ENCODE measurements at regions of chr4 and their contacts with region 1.

Region 1: GRCh38 chr4:25234390-25235370 is 847 bp downstream of the PI4K2B start:
- DNase-seq: peak; percentile 73 to 82 (median 77)
- H3K4me3 ChIP-seq: peak overlapping the region; percentile 55 to 87
- H3K4me3 Mint-ChIP-seq: peak overlapping the region; percentile 83 to 98 (median 94)
- H3K27ac ChIP-seq: peak overlapping the region; percentile 87
- H3K27ac Mint-ChIP-seq: peak overlapping the region; percentile 85 to 98 (median 96)
- H3K4me1 ChIP-seq: peaks cover 37% of the 10 kb centered on the region
- H3K4me1 Mint-ChIP-seq: peaks cover 24 to 76% (median 39%) of the 10 kb centered on the region in 4 donors
- H3K27me3 ChIP-seq: no peaks in the 10 kb centered on the region
- H3K27me3 Mint-ChIP-seq: no peaks in the 10 kb centered on the region

Region 2: GRCh38 chr4:24584175-24584850 is 650.4 kb before region 1 on chr4 and contains the start of gene DHX15:
- CTCF ChIA-PET with region 1: no interaction called
- POLR2A ChIA-PET with region 1: no interaction called
- intact Hi-C with region 1: loop called (anchors 10 kb)
- DNase-seq: peak; percentile 91 to 94 (median 93)
- H3K4me3 ChIP-seq: peak within 1 kb of the TSS; percentile 85 to 96
- H3K4me3 Mint-ChIP-seq: peak within 1 kb of the TSS; percentile 97 to 100 (median 99)
- H3K27ac ChIP-seq: peak within 1 kb of the TSS; percentile 98
- H3K27ac Mint-ChIP-seq: peak within 1 kb of the TSS; percentile 97 to 100 (median 99)
- H3K4me1 ChIP-seq: peaks cover 45% of the 10 kb centered on the region
- H3K4me1 Mint-ChIP-seq: peaks cover 26 to 48% (median 40%) of the 10 kb centered on the region in 4 donors
- H3K27me3 ChIP-seq: no peaks in the 10 kb centered on the region
- H3K27me3 Mint-ChIP-seq: peaks cover 0 to 3% of the 10 kb centered on the region in 2 donors
- total RNA-seq, gene DHX15: 129 to 131 TPM

Region 3: GRCh38 chr4:25113915-25114904 is 120.5 kb before region 1 on chr4:
- CTCF ChIA-PET with region 1: no interaction called
- POLR2A ChIA-PET with region 1: no interaction called
- intact Hi-C with region 1: no loop called
- DNase-seq: no peak
- H3K4me3 ChIP-seq: no peak overlapping the region
- H3K4me3 Mint-ChIP-seq: no peak overlapping the region
- H3K27ac ChIP-seq: no peak overlapping the region
- H3K27ac Mint-ChIP-seq: no peak overlapping the region
- H3K4me1 ChIP-seq: no peaks in the 10 kb centered on the region
- H3K4me1 Mint-ChIP-seq: no peaks in the 10 kb centered on the region
- H3K27me3 ChIP-seq: no peaks in the 10 kb centered on the region
- H3K27me3 Mint-ChIP-seq: no peaks in the 10 kb centered on the region

Region 4: GRCh38 chr4:25180524-25181131 is 54.1 kb before region 1 on chr4:
- CTCF ChIA-PET with region 1: interaction called, 9 read pairs
- POLR2A ChIA-PET with region 1: no interaction called
- intact Hi-C with region 1: loop called (anchors 5 kb)
- DNase-seq: peak in 4 of 5 donors; percentile 23 to 39 (median 34)
- H3K4me3 ChIP-seq: no peak overlapping the region
- H3K4me3 Mint-ChIP-seq: no peak overlapping the region
- H3K27ac ChIP-seq: no peak overlapping the region
- H3K27ac Mint-ChIP-seq: peak overlapping the region in 3 of 7 donors; percentile 29 to 57 (median 43)
- H3K4me1 ChIP-seq: peaks cover 24% of the 10 kb centered on the region
- H3K4me1 Mint-ChIP-seq: peaks cover 22 to 29% (median 27%) of the 10 kb centered on the region in 4 donors
- H3K27me3 ChIP-seq: no peaks in the 10 kb centered on the region
- H3K27me3 Mint-ChIP-seq: no peaks in the 10 kb centered on the region

Region 5: DNA sequence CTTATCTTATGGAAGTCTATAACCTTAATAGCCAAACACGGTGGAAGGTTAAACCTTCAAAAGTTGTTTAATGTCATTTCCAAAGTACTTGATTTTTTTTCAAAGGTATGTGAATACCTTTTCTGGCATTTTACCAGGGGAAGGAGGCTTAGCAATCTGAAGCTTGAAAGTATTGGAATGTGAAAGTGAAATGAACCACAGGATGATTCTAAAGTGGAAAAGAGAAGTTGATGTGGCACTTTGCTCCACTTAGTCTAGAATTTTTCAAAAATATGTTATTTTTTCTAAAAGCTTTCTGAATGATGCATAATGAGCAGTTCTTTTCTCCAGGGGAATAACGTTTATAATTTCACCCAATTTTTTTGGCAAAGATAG is 18.4 kb after region 1 on chr4:
- CTCF ChIA-PET with region 1: interaction called, 6 read pairs
- POLR2A ChIA-PET with region 1: no interaction called
- intact Hi-C with region 1: loop called (anchors 2 kb)
- DNase-seq: no peak
- H3K4me3 ChIP-seq: no peak overlapping the region
- H3K4me3 Mint-ChIP-seq: no peak overlapping the region
- H3K27ac ChIP-seq: no peak overlapping the region
- H3K27ac Mint-ChIP-seq: peak overlapping the region in 5 of 7 donors; percentile 18 to 62 (median 48)
- H3K4me1 ChIP-seq: peaks cover 18% of the 10 kb centered on the region
- H3K4me1 Mint-ChIP-seq: peaks cover 24 to 39% (median 29%) of the 10 kb centered on the region in 4 donors
- H3K27me3 ChIP-seq: no peaks in the 10 kb centered on the region
- H3K27me3 Mint-ChIP-seq: no peaks in the 10 kb centered on the region

Region 6: GRCh38 chr4:25376754-25377571 is 142.3 kb after region 1 on chr4 and contains the start of gene ANAPC4:
- CTCF ChIA-PET with region 1: no interaction called
- POLR2A ChIA-PET with region 1: interaction called, 18 read pairs
- intact Hi-C with region 1: loop called (anchors 1 kb)
- DNase-seq: peak; percentile 92 to 97 (median 93)
- H3K4me3 ChIP-seq: peak within 1 kb of the TSS; percentile 57 to 95
- H3K4me3 Mint-ChIP-seq: peak within 1 kb of the TSS in 1 of 8 donors; percentile 80
- H3K27ac ChIP-seq: peak within 1 kb of the TSS; percentile 73
- H3K27ac Mint-ChIP-seq: peak within 1 kb of the TSS; percentile 65 to 92 (median 89)
- H3K4me1 ChIP-seq: peaks cover 24% of the 10 kb centered on the region
- H3K4me1 Mint-ChIP-seq: peaks cover 3 to 13% (median 10%) of the 10 kb centered on the region in 4 donors
- H3K27me3 ChIP-seq: no peaks in the 10 kb centered on the region
- H3K27me3 Mint-ChIP-seq: no peaks in the 10 kb centered on the region
- total RNA-seq, gene ANAPC4: 61.8 to 63.7 TPM

Region 7: DNA sequence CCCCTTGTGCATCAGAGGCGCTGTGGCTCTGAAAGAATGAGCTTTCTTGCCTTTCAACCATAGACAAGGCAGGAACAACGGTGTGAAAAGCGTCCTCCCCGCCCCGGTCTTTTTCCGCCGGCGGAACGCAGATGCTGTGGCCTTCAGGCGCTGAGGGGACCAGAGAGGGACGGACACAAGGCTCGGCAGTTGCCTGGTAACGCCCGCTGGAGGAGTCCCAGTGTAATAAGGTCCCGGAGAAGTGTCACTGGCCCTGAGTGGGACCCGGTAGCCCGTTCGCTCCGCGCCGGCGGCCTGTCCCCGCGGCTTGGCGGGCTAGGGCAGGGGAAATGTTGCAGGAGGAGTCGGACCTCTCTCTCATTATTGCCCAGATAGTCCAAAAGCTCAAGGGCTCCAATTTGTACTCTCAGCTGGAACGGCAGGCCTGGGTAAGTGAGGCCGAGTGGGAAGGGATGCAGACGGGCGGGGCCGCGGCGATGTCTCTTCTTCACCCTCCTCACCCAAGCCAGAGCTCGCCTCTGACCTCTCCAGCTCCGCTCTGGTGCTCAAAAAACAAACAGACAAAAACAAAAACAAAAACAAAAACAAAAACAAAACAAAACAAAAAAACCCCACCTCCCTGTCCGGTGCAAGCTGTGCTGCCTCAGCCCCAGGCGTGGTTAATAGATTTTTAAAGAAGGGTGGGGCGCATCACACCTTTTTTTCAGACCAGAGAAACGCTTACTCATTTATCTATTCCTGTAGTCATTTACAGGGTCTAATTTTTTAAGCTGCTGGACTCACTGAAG is 1349.4 kb after region 1 on chr4 and contains the start of gene TBC1D19:
- CTCF ChIA-PET with region 1: no interaction called
- POLR2A ChIA-PET with region 1: no interaction called
- intact Hi-C with region 1: loop called (anchors 10 kb)
- DNase-seq: peak; percentile 87 to 90 (median 89)
- H3K4me3 ChIP-seq: peak within 1 kb of the TSS; percentile 44 to 75
- H3K4me3 Mint-ChIP-seq: peak within 1 kb of the TSS; percentile 91 to 99 (median 96)
- H3K27ac ChIP-seq: peak within 1 kb of the TSS; percentile 81
- H3K27ac Mint-ChIP-seq: peak within 1 kb of the TSS; percentile 89 to 99 (median 98)
- H3K4me1 ChIP-seq: peaks cover 17% of the 10 kb centered on the region
- H3K4me1 Mint-ChIP-seq: peaks cover 18 to 38% (median 26%) of the 10 kb centered on the region in 4 donors
- H3K27me3 ChIP-seq: no peaks in the 10 kb centered on the region
- H3K27me3 Mint-ChIP-seq: peaks cover 1 to 2% of the 10 kb centered on the region in 2 donors
- total RNA-seq, gene TBC1D19: 7.9 to 9.5 TPM

Measured in CD4-positive, alpha-beta memory T cell (primary cell).